ENCODE measurements at regions of chr5 and their contacts with region 1.

Region 1: GRCh38 chr5:148145916-148146315 is 22.4 kb upstream of the SPINK14 start:
- DNase-seq: peak; percentile 71 to 77
- H3K4me3 ChIP-seq: no peak overlapping the region
- H3K4me3 Mint-ChIP-seq: peak overlapping the region; percentile 57
- H3K27ac Mint-ChIP-seq: peak overlapping the region; percentile 90
- H3K4me1 ChIP-seq: peaks cover 53% of the 10 kb centered on the region
- H3K4me1 Mint-ChIP-seq: peaks cover 44% of the 10 kb centered on the region
- H3K27me3 ChIP-seq: no peaks in the 10 kb centered on the region
- H3K27me3 Mint-ChIP-seq: no peaks in the 10 kb centered on the region
- CTCF ChIP-seq: no peak

Region 2: GRCh38 chr5:147906332-147907095 is 239.4 kb before region 1 on chr5 and contains the start of gene C5orf46:
- CTCF ChIA-PET with region 1: no interaction called
- POLR2A ChIA-PET with region 1: no interaction called
- intact Hi-C with region 1: no loop called
- DNase-seq: peak in 1 of 2 experiments; percentile 16
- H3K4me3 ChIP-seq: no peak within 1 kb of the TSS
- H3K4me3 Mint-ChIP-seq: no peak within 1 kb of the TSS
- H3K27ac Mint-ChIP-seq: peak within 1 kb of the TSS; percentile 29
- H3K4me1 ChIP-seq: peaks cover 23% of the 10 kb centered on the region
- H3K4me1 Mint-ChIP-seq: peaks cover 22% of the 10 kb centered on the region
- H3K27me3 ChIP-seq: no peaks in the 10 kb centered on the region
- H3K27me3 Mint-ChIP-seq: no peaks in the 10 kb centered on the region
- CTCF ChIP-seq: no peak
- total RNA-seq, gene C5orf46: 0.63 TPM in 1 of 2 replicates, not detected in the other

Region 3: GRCh38 chr5:148135091-148136048 is 10.5 kb before region 1 on chr5:
- CTCF ChIA-PET with region 1: interaction called, 4 read pairs
- POLR2A ChIA-PET with region 1: no interaction called
- intact Hi-C with region 1: loop called (anchors 1 kb)
- DNase-seq: no peak
- H3K4me3 ChIP-seq: no peak overlapping the region
- H3K4me3 Mint-ChIP-seq: no peak overlapping the region
- H3K27ac Mint-ChIP-seq: peak overlapping the region; percentile 64
- H3K4me1 ChIP-seq: peaks cover 34% of the 10 kb centered on the region
- H3K4me1 Mint-ChIP-seq: peaks cover 9% of the 10 kb centered on the region
- H3K27me3 ChIP-seq: no peaks in the 10 kb centered on the region
- H3K27me3 Mint-ChIP-seq: no peaks in the 10 kb centered on the region
- CTCF ChIP-seq: no peak

Region 4: GRCh38 chr5:148163345-148163744 is 17.4 kb after region 1 on chr5:
- CTCF ChIA-PET with region 1: no interaction called
- POLR2A ChIA-PET with region 1: no interaction called
- intact Hi-C with region 1: loop called (anchors 2 kb)
- DNase-seq: peak in 1 of 2 experiments; percentile 3
- H3K4me3 ChIP-seq: no peak overlapping the region
- H3K4me3 Mint-ChIP-seq: no peak overlapping the region
- H3K27ac Mint-ChIP-seq: no peak overlapping the region
- H3K4me1 ChIP-seq: peaks cover 13% of the 10 kb centered on the region; the same call in 1 of the 2 replicates
- H3K4me1 Mint-ChIP-seq: peaks cover 9% of the 10 kb centered on the region
- H3K27me3 ChIP-seq: no peaks in the 10 kb centered on the region
- H3K27me3 Mint-ChIP-seq: no peaks in the 10 kb centered on the region
- CTCF ChIP-seq: no peak

Region 5: DNA sequence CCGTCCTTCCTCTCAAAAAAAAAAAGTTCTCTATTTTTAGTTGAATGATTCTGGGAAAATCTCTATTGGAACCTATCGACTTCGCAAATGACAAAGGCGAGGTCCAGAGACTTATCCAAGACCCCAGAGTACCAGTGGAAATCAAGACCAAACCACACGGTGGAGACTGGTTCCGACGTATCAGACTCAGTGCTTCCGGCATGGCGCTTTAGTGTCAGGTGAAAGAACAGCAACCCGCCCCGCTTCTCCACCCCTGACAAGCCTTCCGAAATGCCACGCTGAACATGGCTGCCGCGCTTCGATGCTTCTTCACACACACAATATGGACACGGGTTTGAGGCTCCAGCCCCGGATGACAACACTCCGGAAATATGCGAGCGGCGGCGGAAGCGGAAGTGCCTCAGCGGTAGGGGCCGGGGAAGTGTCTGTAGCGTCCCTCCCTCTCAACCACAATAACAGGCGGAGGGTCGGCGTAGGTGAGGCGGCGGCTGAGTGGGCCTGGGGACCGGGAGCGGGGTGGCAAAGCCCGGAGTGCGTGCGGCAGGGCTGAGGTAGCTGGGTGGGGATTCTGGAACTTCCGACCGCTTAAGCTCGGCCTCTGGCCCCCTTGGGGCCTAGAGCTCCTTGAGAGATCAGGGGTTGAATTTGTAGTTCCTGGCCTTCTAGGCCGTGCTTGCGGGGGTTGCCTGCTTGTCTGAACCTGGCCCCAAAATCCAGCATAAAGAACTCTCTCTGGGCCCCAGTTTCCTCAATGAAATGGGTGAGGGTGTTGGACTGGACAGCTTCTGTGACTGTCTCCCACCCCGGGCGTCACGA is 237.9 kb after region 1 on chr5 and contains the start of gene FBXO38:
- CTCF ChIA-PET with region 1: no interaction called
- POLR2A ChIA-PET with region 1: no interaction called
- intact Hi-C with region 1: loop called (anchors 2 kb)
- DNase-seq: peak; percentile 96 to 97
- H3K4me3 ChIP-seq: peak within 1 kb of the TSS; percentile 74
- H3K4me3 Mint-ChIP-seq: peak within 1 kb of the TSS; percentile 92
- H3K27ac Mint-ChIP-seq: peak within 1 kb of the TSS; percentile 98
- H3K4me1 ChIP-seq: peaks cover 16% of the 10 kb centered on the region
- H3K4me1 Mint-ChIP-seq: peaks cover 15% of the 10 kb centered on the region
- H3K27me3 ChIP-seq: no peaks in the 10 kb centered on the region
- H3K27me3 Mint-ChIP-seq: no peaks in the 10 kb centered on the region
- CTCF ChIP-seq: peak in 1 of 2 experiments; percentile 1
- total RNA-seq, gene FBXO38: 36.7 and 45.5 TPM in 2 replicates